Ascending aorta (tissue), 2 donors: ENCODE measurements at regions of chr4 and their contacts with region 1.

Region 1: DNA sequence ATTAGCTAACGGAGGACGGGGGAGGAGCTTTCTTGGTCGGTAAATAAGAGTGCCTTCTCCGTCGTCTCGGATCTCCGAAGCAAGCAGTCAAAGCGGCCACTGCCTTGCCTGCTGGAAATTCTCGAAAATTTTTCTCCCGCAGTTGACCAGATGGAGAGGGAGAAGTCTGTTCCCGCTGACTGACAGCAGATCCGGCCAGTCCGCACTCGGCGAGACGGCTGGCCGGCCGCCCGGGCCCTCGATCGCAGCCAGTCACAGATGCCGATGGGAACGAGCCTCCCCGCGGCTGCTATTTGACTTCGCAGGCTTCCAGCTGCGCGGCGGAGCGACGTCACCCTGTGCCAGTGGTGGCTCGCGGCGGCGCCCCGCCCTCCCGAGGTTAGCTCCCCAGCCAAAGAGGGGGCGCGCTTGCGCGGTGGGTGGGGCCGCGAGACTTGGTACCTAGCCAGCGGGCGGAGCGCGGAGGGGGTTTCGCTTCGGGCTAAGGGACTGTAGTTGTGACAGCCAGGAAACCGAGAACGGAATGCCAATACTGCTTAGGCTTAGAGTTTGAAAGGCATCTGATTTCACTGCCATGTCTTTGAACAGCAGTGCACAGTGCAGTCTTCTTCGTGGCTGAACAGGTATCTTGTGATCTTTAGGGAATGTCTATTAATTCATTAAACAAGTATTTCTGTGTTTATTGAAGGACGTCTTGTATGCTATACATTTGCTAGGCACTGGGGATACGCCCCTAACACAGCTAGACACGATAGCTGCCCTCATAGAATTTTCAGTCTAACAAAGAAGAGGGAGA is at the start of gene PPM1K:
- DNase-seq: peak; percentile 99 to 100
- H3K4me3 ChIP-seq: peak within 1 kb of the TSS; percentile 69 to 83
- H3K27ac ChIP-seq: peak within 1 kb of the TSS; percentile 98
- H3K4me1 ChIP-seq: peaks cover 11 to 30% of the 10 kb centered on the region in 2 donors
- H3K27me3 ChIP-seq: no peaks in the 10 kb centered on the region
- CTCF ChIP-seq: peak in 1 of 3 experiments; percentile 16
- total RNA-seq, gene PPM1K: 17.0 TPM

Region 2: GRCh38 chr4:86593688-86594558 is 1690.7 kb before region 1 on chr4 and contains the start of gene PTPN13:
- intact Hi-C with region 1: loop called (anchors 5 kb)
- DNase-seq: peak; percentile 95 to 99
- H3K4me3 ChIP-seq: peak within 1 kb of the TSS; percentile 59 to 82
- H3K27ac ChIP-seq: peak within 1 kb of the TSS; percentile 79 to 90
- H3K4me1 ChIP-seq: peaks cover 0 to 4% of the 10 kb centered on the region in 2 donors
- H3K27me3 ChIP-seq: no peaks in the 10 kb centered on the region
- CTCF ChIP-seq: no peak
- total RNA-seq, gene PTPN13: 20.8 TPM

Region 3: GRCh38 chr4:88017516-88018297 is 266.9 kb before region 1 on chr4:
- intact Hi-C with region 1: loop called (anchors 5 kb)
- DNase-seq: peak in 1 of 2 donors; percentile 76
- H3K4me3 ChIP-seq: peak overlapping the region in 1 of 2 donors; percentile 45
- H3K27ac ChIP-seq: peak overlapping the region; percentile 94 to 98
- H3K4me1 ChIP-seq: peaks cover 4 to 63% of the 10 kb centered on the region in 2 donors
- H3K27me3 ChIP-seq: no peaks in the 10 kb centered on the region
- CTCF ChIP-seq: no peak

Region 4: DNA sequence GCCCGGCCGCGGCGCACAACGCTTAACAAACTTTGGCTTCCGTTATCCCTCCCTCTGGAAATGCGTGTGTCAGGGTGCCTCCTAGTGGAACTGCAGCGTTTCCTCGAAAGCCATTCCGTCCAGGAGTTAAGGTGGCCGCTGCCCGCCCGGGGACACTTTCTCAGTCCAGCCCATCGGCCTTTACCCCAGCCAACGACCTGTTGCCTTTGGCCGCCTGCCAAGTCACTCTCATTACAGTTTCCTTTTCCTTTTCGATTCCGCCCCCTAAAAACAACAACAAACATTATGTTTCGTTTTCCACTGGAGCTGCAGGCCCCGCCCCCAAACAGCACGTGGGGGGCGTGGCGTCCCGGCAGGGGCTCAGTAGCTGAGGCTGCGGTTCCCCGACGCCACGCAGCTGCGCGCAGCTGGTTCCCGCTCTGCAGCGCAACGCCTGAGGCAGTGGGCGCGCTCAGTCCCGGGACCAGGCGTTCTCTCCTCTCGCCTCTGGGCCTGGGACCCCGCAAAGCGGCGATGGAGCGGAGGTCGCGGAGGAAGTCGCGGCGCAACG is 172.2 kb after region 1 on chr4 and contains the start of gene HERC5:
- intact Hi-C with region 1: loop called (anchors 1 kb)
- DNase-seq: peak; percentile 83 to 97
- H3K4me3 ChIP-seq: peak within 1 kb of the TSS; percentile 68 to 99
- H3K27ac ChIP-seq: peak within 1 kb of the TSS; percentile 83 to 98
- H3K4me1 ChIP-seq: peaks cover 3 to 12% of the 10 kb centered on the region in 2 donors
- H3K27me3 ChIP-seq: no peaks in the 10 kb centered on the region
- CTCF ChIP-seq: peak; percentile 54 to 76 (median 72)
- total RNA-seq, gene HERC5: 0.32 TPM

Region 5: GRCh38 chr4:88523325-88524129 is 238.9 kb after region 1 on chr4 and contains the start of gene PYURF:
- intact Hi-C with region 1: loop called (anchors 1 kb)
- DNase-seq: peak; percentile 88 to 99
- H3K4me3 ChIP-seq: peak within 1 kb of the TSS; percentile 87 to 95
- H3K27ac ChIP-seq: peak within 1 kb of the TSS; percentile 87 to 94
- H3K4me1 ChIP-seq: peaks cover 0 to 16% of the 10 kb centered on the region in 2 donors
- H3K27me3 ChIP-seq: no peaks in the 10 kb centered on the region
- CTCF ChIP-seq: peak in 1 of 3 experiments; percentile 5
- total RNA-seq, gene PYURF: 91.6 TPM

Region 6: GRCh38 chr4:88613417-88613875 is 328.8 kb after region 1 on chr4:
- intact Hi-C with region 1: loop called (anchors 5 kb)
- DNase-seq: no peak
- H3K4me3 ChIP-seq: no peak overlapping the region
- H3K27ac ChIP-seq: peak overlapping the region; percentile 72 to 78
- H3K4me1 ChIP-seq: peaks cover 15 to 35% of the 10 kb centered on the region in 2 donors
- H3K27me3 ChIP-seq: no peaks in the 10 kb centered on the region
- CTCF ChIP-seq: no peak

Region 7: DNA sequence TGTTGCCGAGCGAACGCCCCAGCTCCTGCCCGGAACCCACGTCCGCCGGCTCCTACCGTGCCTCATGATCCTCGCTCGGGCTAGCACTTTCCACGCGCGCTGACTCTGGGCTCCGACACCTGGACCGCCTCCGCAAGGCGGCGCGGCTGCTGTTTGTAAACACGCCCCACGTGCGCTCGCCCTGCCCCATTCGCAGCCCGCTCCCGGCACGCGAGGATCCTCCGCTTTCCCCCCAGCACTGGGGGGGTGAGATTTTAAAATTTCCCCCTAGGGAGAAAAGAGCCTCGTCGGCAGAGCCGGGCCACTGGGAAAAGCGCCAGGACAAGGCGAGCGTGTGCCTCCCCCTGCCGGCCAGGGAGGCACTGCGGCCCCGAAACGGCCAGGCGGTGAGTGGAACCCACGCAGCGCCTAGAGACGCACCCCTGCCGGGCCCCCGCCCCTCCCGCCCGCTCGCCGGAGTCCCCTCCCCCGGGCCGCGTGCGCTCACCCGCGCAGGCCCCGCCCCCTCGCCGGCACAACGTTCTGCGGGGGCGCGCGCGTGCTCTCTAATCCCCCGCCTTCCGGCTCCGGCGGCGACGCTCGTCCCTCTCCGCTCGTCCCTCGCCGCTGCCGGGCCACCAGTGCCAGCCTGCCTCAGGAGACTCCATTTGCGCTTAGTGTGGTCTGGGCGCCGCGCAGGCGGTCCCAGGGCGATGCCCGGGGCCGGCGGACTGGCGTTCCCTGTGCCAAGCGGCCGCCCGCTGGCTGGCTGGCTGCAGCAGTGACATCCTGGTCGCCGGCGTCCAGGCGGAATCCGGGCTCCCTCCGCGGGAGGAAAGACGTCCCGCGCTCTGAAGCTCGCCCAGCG is 826.6 kb after region 1 on chr4 and contains the start of gene TIGD2:
- intact Hi-C with region 1: loop called (anchors 2 kb)
- DNase-seq: peak; percentile 29 to 91
- H3K4me3 ChIP-seq: peak within 1 kb of the TSS; percentile 68 to 79
- H3K27ac ChIP-seq: peak within 1 kb of the TSS; percentile 77 to 81
- H3K4me1 ChIP-seq: peaks cover 3 to 4% of the 10 kb centered on the region in 2 donors
- H3K27me3 ChIP-seq: no peaks in the 10 kb centered on the region
- CTCF ChIP-seq: peak; percentile 79 to 86 (median 82)
- total RNA-seq, gene TIGD2: 0.21 TPM